Activated CD4-positive, alpha-beta T cell treated with anti-CD3 and anti-CD28 coated beads for 36 hours (primary cell): ENCODE measurements at regions of chr12 and their contacts with region 1.

Region 1: GRCh38 chr12:49515266-49515665 is 23.6 kb upstream of the KCNH3 start:
- DNase-seq: no peak
- ATAC-seq: no peak
- H3K4me3 Mint-ChIP-seq: no peak overlapping the region
- H3K27ac Mint-ChIP-seq: no peak overlapping the region
- H3K4me1 Mint-ChIP-seq: peaks cover 11% of the 10 kb centered on the region
- H3K27me3 Mint-ChIP-seq: no peaks in the 10 kb centered on the region

Region 2: GRCh38 chr12:49288412-49288853 is 226.8 kb before region 1 on chr12:
- CTCF ChIA-PET with region 1: interaction called, 10 read pairs
- POLR2A ChIA-PET with region 1: no interaction called
- intact Hi-C with region 1: loop called (anchors 1 to 2 kb)
- DNase-seq: peak; percentile 81
- ATAC-seq: peak; percentile 80
- H3K4me3 Mint-ChIP-seq: no peak overlapping the region
- H3K27ac Mint-ChIP-seq: no peak overlapping the region
- H3K4me1 Mint-ChIP-seq: no peaks in the 10 kb centered on the region
- H3K27me3 Mint-ChIP-seq: peaks cover 22% of the 10 kb centered on the region

Region 3: DNA sequence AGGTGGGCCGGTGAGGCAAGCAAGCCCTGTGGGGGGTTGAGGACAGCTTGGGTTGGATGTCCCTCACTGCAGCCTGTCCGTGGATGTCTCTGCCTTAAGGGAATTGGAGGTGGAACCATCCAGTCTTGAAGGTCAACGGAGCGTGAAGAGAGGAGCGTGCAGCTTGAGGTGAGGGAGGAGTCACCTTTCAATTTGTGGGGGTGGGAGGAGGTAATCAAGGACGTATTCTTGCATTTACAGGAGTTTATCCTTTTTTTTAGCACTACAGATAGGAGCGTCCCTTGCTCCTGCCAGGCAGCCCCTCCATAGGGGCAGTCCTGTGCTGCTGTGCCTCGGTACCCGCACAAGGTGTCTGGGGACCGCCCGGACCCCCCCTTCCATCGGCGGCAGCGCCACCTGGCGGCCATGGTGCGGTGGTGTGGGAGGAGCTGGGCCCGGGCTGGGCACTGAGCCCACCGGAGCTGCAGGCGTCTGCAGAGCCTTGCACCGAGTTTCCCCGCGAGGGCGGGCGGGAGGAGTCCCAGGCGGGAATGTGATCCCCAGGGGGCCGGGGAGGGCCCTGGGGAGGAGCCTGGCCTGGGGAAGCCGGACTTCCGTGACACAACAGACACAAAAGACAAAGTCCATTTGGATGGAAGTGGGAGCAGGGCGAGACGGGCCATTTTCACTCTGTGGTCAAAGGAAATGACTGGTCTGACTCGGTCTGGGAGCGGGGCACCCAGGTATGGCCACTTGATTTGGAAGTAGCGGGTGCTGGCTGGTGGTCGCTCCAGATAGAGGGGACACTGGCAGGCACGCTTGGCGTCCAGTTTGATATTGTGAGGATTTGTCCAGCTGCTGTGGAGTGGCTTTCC is 167.7 kb before region 1 on chr12:
- CTCF ChIA-PET with region 1: interaction called, 85 read pairs
- POLR2A ChIA-PET with region 1: no interaction called
- intact Hi-C with region 1: no loop called
- DNase-seq: peak; percentile 84
- ATAC-seq: peak; percentile 67
- H3K4me3 Mint-ChIP-seq: peak overlapping the region; percentile 29
- H3K27ac Mint-ChIP-seq: no peak overlapping the region
- H3K4me1 Mint-ChIP-seq: peaks cover 39% of the 10 kb centered on the region
- H3K27me3 Mint-ChIP-seq: peaks cover 54% of the 10 kb centered on the region

Region 4: GRCh38 chr12:49366652-49367380 is 148.4 kb before region 1 on chr12:
- CTCF ChIA-PET with region 1: interaction called, 374 read pairs
- POLR2A ChIA-PET with region 1: no interaction called
- intact Hi-C with region 1: no loop called
- DNase-seq: peak; percentile 94
- ATAC-seq: peak; percentile 86
- H3K4me3 Mint-ChIP-seq: peak overlapping the region; percentile 97
- H3K27ac Mint-ChIP-seq: peak overlapping the region; percentile 99
- H3K4me1 Mint-ChIP-seq: peaks cover 25% of the 10 kb centered on the region
- H3K27me3 Mint-ChIP-seq: no peaks in the 10 kb centered on the region

Region 5: DNA sequence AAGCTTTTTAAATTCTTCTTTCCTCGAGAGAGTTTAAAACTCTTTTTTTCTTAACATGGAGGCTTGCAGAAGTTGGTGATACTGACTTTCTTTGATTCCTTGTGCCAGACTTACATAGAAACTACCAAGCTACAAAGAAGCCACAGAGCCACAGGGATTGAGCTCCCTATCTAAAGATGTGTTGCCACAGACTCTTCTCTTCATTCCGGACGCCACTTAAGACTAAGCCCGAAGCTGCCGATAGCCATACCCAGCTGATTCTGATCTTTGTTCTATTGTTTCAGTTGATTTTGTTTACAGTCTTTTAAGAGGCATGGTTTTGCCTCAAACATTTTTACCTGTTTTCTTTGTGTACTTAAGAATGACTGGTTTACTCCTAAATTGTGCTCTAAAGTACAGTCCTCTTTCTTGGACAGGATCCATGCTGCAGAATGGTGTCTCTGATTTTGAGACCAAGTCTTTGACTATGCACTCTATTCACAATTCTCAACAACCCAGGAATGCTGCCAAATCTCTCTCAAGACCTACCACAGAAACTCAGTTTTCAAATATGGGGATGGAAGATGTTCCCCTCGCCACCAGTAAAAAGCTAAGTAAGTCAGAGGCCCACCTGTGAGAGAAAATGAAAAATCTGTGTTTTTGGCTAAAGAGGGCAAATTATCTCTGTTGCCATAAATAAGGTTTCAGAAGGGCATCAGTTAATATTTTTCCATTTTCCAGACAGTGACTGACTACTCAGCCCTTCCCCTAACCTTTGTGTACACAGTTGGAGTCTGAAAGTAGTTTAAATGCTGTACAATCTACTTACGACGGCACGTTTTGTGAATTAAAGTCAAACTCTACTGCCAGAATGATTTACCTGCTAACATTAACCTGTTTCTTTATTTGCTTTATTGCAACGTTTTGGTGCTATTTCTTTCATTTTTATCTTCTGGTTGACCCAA is 18.6 kb before region 1 on chr12:
- CTCF ChIA-PET with region 1: interaction called, 54 read pairs
- POLR2A ChIA-PET with region 1: no interaction called
- intact Hi-C with region 1: no loop called
- DNase-seq: no peak
- ATAC-seq: no peak
- H3K4me3 Mint-ChIP-seq: no peak overlapping the region
- H3K27ac Mint-ChIP-seq: no peak overlapping the region
- H3K4me1 Mint-ChIP-seq: peaks cover 4% of the 10 kb centered on the region
- H3K27me3 Mint-ChIP-seq: no peaks in the 10 kb centered on the region

Region 6: GRCh38 chr12:49503674-49504180 is 11.5 kb before region 1 on chr12:
- CTCF ChIA-PET with region 1: interaction called, 54 read pairs
- POLR2A ChIA-PET with region 1: no interaction called
- intact Hi-C with region 1: no loop called
- DNase-seq: no peak
- ATAC-seq: no peak
- H3K4me3 Mint-ChIP-seq: no peak overlapping the region
- H3K27ac Mint-ChIP-seq: no peak overlapping the region
- H3K4me1 Mint-ChIP-seq: peaks cover 12% of the 10 kb centered on the region
- H3K27me3 Mint-ChIP-seq: no peaks in the 10 kb centered on the region

Region 7: GRCh38 chr12:49580572-49581535 is 65.6 kb after region 1 on chr12:
- CTCF ChIA-PET with region 1: interaction called, 9 read pairs
- POLR2A ChIA-PET with region 1: no interaction called
- intact Hi-C with region 1: loop called in 1 of 2 experiments (anchors 2 kb)
- DNase-seq: peak; percentile 77
- ATAC-seq: peak; percentile 84
- H3K4me3 Mint-ChIP-seq: no peak overlapping the region
- H3K27ac Mint-ChIP-seq: peak overlapping the region; percentile 68
- H3K4me1 Mint-ChIP-seq: peaks cover 21% of the 10 kb centered on the region
- H3K27me3 Mint-ChIP-seq: no peaks in the 10 kb centered on the region